Activated CD4-positive, alpha-beta memory T cell treated with anti-CD3 and anti-CD28 coated beads for 36 hours (primary cell): ENCODE measurements at regions of chr15 and their contacts with region 1.

Region 1: GRCh38 chr15:43285609-43286037 is 18.9 kb upstream of the TGM5 start:
- DNase-seq: peak; percentile 62
- H3K4me3 Mint-ChIP-seq: no peak overlapping the region
- H3K27ac Mint-ChIP-seq: no peak overlapping the region
- H3K4me1 Mint-ChIP-seq: peaks cover 2% of the 10 kb centered on the region
- H3K27me3 Mint-ChIP-seq: peaks cover 7% of the 10 kb centered on the region

Region 2: DNA sequence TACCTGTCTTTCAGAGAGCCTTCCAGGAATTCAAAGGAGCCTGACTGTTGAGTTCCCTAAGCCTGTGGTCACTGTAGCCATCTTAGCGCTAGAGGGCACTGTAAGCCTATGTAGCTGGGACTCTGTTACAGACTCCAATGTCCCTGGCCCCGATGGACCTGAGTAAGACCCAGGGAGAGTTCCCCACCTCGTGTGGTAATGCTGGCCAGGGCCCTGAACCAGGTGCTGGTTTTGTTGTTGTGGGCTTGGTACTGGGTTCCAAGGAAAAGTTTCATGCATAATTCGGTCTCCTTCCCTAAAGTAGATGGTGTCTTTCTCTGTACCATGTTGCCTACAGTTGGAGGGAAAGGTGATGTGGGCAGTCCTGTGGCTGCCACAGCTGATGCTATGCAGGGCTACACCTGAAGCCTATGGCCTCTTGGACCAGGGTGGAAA is 581.1 kb before region 1 on chr15:
- CTCF ChIA-PET with region 1: no interaction called
- POLR2A ChIA-PET with region 1: no interaction called
- intact Hi-C with region 1: loop called (anchors 5 kb)
- DNase-seq: peak; percentile 73
- H3K4me3 Mint-ChIP-seq: no peak overlapping the region
- H3K27ac Mint-ChIP-seq: no peak overlapping the region
- H3K4me1 Mint-ChIP-seq: no peaks in the 10 kb centered on the region
- H3K27me3 Mint-ChIP-seq: no peaks in the 10 kb centered on the region

Region 3: DNA sequence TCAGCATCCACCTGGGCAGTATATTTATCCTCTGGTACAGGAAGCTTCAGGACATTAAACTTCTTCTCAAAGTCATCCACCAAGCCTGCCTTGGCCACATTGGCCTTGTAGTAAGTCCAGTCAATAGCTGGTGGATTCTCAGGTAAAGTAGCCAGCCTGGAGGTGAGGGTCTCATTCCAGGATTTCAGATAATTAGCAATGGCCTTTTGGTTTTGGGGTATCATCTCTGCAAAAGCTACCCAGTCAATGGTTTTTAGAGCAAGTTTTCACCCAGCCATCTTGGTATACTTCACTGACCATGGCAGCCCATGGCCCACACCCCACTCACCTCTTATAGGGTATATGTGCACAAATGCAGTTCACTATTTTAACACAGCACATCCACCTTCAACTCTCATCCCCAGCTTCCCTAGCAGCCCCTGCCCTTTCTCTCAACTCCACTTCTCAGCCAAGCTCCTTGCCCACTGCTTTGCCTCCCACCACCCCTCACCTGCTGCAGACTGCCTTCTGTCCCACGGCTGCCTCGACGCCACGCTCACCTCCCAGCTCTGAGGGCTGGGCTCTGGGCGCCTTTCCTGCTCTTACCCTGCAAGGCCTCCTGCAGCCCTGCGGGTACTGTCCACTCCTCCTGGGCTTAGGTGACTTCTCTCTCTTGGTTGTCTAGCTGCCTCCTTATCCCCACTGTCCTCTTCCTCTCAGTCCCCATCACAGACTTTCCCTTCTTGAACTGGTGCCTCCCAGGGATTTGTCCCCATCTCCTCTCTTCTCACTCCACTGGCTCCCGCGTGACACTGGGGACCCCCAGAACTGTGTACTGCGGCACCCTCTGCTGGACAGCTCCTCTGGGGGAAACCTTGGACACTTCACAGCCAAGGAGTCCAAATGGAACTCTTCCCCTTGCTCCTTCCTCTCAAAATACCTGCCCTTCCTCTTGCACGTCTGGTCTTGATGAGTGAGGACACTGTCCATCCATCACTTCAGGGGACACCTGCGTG is 17.2 kb before region 1 on chr15:
- CTCF ChIA-PET with region 1: interaction called, 23 read pairs
- POLR2A ChIA-PET with region 1: no interaction called
- intact Hi-C with region 1: no loop called
- DNase-seq: peak; percentile 32
- H3K4me3 Mint-ChIP-seq: no peak overlapping the region
- H3K27ac Mint-ChIP-seq: no peak overlapping the region
- H3K4me1 Mint-ChIP-seq: no peaks in the 10 kb centered on the region
- H3K27me3 Mint-ChIP-seq: peaks cover 7% of the 10 kb centered on the region